Colonic mucosa (tissue), 4 donors: ENCODE measurements at regions of chr1 and their contacts with region 1.

Region 1: DNA sequence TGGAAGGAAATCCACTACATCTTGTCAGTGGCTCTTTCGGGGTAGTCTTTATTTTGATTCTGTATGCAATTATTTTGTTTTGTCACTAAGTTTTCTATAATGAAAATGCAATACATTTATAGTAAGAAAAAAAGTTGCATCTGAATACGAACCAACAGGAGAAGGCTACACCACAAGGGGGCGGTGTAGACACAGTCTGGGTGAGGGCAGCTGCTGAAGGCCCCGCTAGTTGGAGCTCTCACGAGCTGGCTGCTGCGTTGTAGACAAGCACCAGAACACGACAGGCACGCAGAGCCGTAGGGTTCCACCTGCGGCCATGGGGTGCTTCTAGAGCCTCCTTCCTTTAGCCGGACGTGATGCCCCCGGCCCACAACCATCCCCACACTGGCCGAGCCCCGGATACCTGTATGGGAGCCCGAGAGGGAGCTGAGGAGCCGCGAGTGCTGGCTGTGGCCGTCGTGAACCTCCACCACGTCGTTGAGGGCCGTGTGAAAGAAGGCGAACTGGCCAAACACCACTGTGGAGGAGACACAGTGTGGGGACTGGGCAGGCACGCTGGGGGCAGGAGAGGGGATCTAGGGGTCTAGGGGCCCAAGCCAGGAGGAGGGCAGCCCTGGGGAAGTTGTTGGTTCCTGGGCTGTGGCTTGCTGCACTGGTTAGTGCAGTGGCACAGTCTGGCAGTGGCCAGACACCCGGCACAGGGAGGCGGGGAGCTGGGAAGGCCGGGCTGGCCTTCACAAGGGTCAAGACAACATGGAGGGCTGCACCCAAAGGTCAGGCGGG is 160.8 kb downstream of the ZSCAN20 start:
- DNase-seq: peak; percentile 90
- H3K4me3 ChIP-seq: no peak overlapping the region
- H3K27ac ChIP-seq: no peak overlapping the region
- H3K4me1 ChIP-seq: no peaks in the 10 kb centered on the region
- H3K27me3 ChIP-seq: no peaks in the 10 kb centered on the region
- CTCF ChIP-seq: peak; percentile 85

Region 2: DNA sequence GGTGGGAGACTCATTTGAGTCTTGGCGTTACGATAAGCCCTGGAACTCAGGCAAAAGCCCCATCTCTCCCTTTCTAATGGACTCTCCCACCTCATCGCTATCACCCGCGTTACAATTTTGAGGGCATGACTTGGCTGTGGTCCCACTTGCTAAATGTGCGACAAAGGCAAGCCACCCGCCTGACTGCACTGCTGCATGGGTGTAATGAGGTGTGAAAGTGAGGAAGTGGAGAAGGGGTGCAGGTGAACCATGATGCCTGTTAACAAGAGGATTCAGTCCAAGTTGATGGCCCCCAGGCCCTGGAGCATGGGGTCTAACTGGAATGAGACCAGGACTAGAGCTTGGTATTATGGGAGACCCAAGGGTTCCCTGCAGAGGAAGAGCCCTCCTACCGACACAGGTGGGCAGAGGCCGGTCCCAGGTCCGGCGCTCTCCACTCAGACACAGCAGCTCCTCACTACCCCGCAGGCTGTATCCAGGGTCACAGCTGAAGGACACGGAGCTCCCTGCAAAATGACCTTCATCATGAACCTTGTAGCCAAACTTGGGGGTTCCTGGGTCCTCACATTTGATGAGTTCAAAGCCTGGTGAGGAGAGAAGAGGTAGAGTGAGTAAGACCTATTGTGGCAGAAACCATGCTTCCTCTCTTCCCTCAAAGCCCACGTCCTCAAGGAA is 65.3 kb after region 1 on chr1:
- intact Hi-C with region 1: no loop called
- DNase-seq: no peak
- H3K4me3 ChIP-seq: no peak overlapping the region
- H3K27ac ChIP-seq: no peak overlapping the region
- H3K4me1 ChIP-seq: no peaks in the 10 kb centered on the region
- H3K27me3 ChIP-seq: no peaks in the 10 kb centered on the region
- CTCF ChIP-seq: no peak

Region 3: GRCh38 chr1:34162852-34163766 is 529.9 kb after region 1 on chr1:
- intact Hi-C with region 1: loop called (anchors 5 kb)
- DNase-seq: peak; percentile 24
- H3K4me3 ChIP-seq: peak overlapping the region; percentile 14
- H3K27ac ChIP-seq: no peak overlapping the region
- H3K4me1 ChIP-seq: no peaks in the 10 kb centered on the region
- H3K27me3 ChIP-seq: peaks cover 39% of the 10 kb centered on the region
- CTCF ChIP-seq: no peak

Region 4: GRCh38 chr1:34597877-34598514 is 964.8 kb after region 1 on chr1:
- intact Hi-C with region 1: loop called (anchors 5 kb)
- DNase-seq: peak; percentile 75
- H3K4me3 ChIP-seq: no peak overlapping the region
- H3K27ac ChIP-seq: no peak overlapping the region
- H3K4me1 ChIP-seq: no peaks in the 10 kb centered on the region
- H3K27me3 ChIP-seq: no peaks in the 10 kb centered on the region
- CTCF ChIP-seq: peak; percentile 67

Region 5: GRCh38 chr1:34742667-34743270 is 1109.6 kb after region 1 on chr1:
- intact Hi-C with region 1: loop called (anchors 5 kb)
- DNase-seq: peak; percentile 84
- H3K4me3 ChIP-seq: no peak overlapping the region
- H3K27ac ChIP-seq: no peak overlapping the region
- H3K4me1 ChIP-seq: no peaks in the 10 kb centered on the region
- H3K27me3 ChIP-seq: no peaks in the 10 kb centered on the region
- CTCF ChIP-seq: peak; percentile 95